PC-3 (cell line): ENCODE measurements at regions of chr2 and their contacts with region 1.

Region 1: GRCh38 chr2:102258386-102259074 is 52.8 kb upstream of the IL1RL1 start:
- DNase-seq: peak; percentile 85
- ATAC-seq: peak; percentile 95
- H3K4me3 ChIP-seq: no peak overlapping the region
- H3K27ac ChIP-seq: peak overlapping the region; percentile 52
- H3K4me1 ChIP-seq: peaks cover 14% of the 10 kb centered on the region
- H3K27me3 ChIP-seq: no peaks in the 10 kb centered on the region
- CTCF ChIP-seq: no peak

Region 2: DNA sequence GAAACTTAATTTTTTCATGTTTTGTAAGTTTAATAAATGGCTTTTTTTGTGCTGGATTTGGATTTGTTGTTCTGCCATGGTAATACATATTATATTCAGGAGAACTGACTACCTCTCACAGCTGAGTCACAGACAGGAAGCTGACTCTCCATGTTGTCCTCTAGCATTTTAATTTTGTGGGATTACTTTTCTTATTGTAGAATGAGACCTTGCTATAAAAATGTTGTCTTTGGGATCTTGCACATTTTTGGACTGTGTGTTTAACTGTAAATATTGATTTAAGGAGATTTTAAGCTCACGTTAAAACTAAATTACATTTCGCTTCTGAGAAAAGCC is 512.2 kb before region 1 on chr2:
- CTCF ChIA-PET with region 1: no interaction called
- POLR2A ChIA-PET with region 1: interaction called, 27 read pairs
- intact Hi-C with region 1: no loop called
- DNase-seq: peak; percentile 88
- ATAC-seq: peak; percentile 92
- H3K4me3 ChIP-seq: peak overlapping the region; percentile 49
- H3K27ac ChIP-seq: peak overlapping the region; percentile 98
- H3K4me1 ChIP-seq: peaks cover 57% of the 10 kb centered on the region
- H3K27me3 ChIP-seq: no peaks in the 10 kb centered on the region
- CTCF ChIP-seq: no peak

Region 3: DNA sequence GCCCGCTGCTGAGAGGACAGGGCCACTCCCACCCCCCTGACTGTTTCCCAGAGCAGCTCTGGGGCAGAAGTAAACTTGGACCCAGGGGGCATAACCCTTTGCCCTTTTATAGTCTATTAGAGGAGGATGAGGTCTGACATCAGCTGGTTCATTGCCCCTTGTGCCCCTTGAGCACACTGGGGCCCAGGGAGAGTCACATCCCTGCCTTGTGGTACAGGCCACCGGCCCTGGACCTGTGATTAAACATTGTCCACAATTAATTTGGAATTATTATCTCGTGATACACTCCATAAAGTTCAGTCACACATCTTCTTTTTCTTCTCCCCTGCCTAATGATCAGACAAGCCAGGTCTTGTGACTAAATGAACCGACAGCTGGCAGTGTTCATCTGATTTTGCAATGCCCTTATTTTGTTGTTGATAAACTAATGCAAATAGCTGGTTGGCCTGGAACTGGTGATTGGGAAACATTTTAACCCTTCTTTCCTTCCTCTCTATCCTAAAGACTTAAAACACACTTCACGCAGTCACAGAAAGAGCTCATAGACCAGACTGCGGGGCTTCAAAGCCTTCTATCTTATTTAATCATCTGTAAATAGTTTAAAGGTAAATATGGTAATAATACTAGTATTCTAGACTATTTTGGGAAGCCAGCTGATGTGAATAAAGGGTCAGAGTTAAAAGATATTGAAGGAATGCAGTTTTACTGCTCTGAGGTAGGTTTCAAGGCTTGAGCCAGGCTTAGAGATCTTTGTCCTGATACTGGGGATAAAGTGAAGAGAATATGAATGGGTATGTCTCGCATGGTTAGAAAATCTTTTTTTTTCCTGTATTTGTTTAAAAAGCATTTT is 102.7 kb before region 1 on chr2:
- CTCF ChIA-PET with region 1: no interaction called
- POLR2A ChIA-PET with region 1: no interaction called
- intact Hi-C with region 1: no loop called
- DNase-seq: no peak
- ATAC-seq: no peak
- H3K4me3 ChIP-seq: no peak overlapping the region
- H3K27ac ChIP-seq: no peak overlapping the region
- H3K4me1 ChIP-seq: peaks cover 2% of the 10 kb centered on the region
- H3K27me3 ChIP-seq: no peaks in the 10 kb centered on the region
- CTCF ChIP-seq: no peak

Region 4: DNA sequence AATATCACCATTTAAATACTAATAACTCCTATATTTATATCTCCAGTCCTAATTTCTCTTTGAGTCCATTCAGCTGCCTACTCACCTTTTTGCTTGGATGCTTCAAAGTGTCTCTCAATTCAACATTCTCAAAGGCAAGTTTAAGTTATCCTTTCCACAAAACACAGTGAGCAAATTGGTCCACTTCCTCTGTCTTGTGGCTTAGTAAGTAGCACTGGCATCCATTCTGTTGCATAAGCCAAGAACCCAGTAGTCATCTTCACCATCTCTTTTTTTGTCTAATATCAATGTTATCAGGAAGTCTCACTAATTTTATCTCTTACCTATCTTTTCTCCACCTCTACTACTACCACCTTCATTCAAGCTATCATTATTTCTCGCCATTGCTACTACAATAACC is 25.5 kb after region 1 on chr2:
- CTCF ChIA-PET with region 1: no interaction called
- POLR2A ChIA-PET with region 1: no interaction called
- intact Hi-C with region 1: loop called (anchors 2 kb)
- DNase-seq: no peak
- ATAC-seq: no peak
- H3K4me3 ChIP-seq: no peak overlapping the region
- H3K27ac ChIP-seq: no peak overlapping the region
- H3K4me1 ChIP-seq: peaks cover 28% of the 10 kb centered on the region
- H3K27me3 ChIP-seq: no peaks in the 10 kb centered on the region
- CTCF ChIP-seq: no peak

Region 5: DNA sequence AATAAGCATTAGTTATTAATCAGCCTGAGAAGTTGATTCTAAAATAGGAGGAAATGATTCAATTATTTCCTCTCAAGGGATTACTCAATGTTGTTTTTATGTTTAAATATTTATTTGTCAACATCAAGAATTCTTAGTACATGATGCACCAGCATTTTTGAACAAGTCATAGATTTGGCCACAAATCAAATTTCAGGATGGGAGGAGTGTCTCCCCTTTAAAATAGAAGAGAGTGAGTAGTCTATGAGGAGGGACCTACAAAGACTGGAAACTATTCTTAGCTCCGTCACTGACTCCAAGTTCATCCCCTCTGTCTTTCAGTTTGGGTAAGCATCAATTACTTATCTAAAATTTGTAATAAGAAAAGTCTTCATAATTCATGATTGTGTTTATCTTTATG is 78.5 kb after region 1 on chr2:
- CTCF ChIA-PET with region 1: interaction called, 6 read pairs
- POLR2A ChIA-PET with region 1: interaction called, 3 read pairs
- intact Hi-C with region 1: loop called (anchors 1 kb)
- DNase-seq: peak; percentile 95
- ATAC-seq: peak; percentile 78
- H3K4me3 ChIP-seq: peak overlapping the region; percentile 62
- H3K27ac ChIP-seq: peak overlapping the region; percentile 99
- H3K4me1 ChIP-seq: peaks cover 42% of the 10 kb centered on the region
- H3K27me3 ChIP-seq: no peaks in the 10 kb centered on the region
- CTCF ChIP-seq: no peak

Region 6: GRCh38 chr2:102355526-102356380 is 97.2 kb after region 1 on chr2 and contains the start of gene IL18R1:
- CTCF ChIA-PET with region 1: interaction called, 5 read pairs
- POLR2A ChIA-PET with region 1: interaction called, 30 read pairs
- intact Hi-C with region 1: loop called (anchors 1 kb)
- DNase-seq: peak; percentile 82
- ATAC-seq: peak; percentile 98
- H3K4me3 ChIP-seq: peak within 1 kb of the TSS; percentile 91
- H3K27ac ChIP-seq: peak within 1 kb of the TSS; percentile 31; the same call in 1 of the 2 replicates
- H3K4me1 ChIP-seq: peaks cover 6% of the 10 kb centered on the region; the same call in 1 of the 2 replicates
- H3K27me3 ChIP-seq: no peaks in the 10 kb centered on the region
- CTCF ChIP-seq: peak; percentile 90
- total RNA-seq, gene IL18R1: 1.2 and 3.6 TPM in 2 replicates

Region 7: DNA sequence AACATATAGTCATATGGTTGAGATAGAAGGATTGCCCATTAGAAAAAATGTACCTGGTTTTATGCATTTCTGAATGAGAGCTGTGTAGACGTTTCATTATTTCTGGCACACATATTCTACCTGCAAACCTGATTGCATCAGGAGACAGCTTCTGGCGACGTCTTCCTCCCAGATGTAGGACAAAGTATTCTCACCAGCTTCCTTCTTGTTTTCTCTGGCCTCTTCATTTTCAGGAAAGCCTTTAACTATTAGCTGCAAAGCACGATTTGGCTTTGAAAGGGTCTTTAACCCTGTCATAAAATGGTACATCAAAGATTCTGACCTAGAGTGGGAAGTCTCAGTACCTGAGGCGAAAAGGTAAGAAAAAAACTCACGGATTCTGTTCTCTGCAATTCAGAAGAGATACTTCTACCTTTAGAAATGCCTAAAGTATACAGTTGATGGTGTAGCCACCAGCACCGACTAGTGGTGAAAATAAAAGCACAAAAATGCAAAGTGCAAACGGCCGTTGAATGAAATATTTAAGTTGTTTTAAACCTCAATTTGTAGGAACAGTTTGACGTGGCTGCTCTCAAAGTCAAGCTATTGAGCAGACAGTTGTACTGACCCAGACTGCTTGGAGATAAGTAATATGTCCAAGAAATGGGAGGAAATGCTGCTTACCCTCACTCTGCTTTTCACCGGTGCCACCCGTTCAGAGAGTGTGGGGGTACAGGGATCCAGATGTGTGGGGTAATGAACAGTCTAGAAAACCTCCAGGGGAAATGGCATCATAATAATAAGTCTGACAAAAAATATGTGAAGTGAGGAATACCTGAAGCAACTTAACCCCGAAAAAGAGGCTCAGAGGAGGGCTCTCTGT is 184.7 kb after region 1 on chr2:
- CTCF ChIA-PET with region 1: interaction called, 3 read pairs
- POLR2A ChIA-PET with region 1: no interaction called
- intact Hi-C with region 1: loop called (anchors 1 kb)
- DNase-seq: peak; percentile 72
- ATAC-seq: peak; percentile 81
- H3K4me3 ChIP-seq: peak overlapping the region; percentile 52
- H3K27ac ChIP-seq: no peak overlapping the region
- H3K4me1 ChIP-seq: peaks cover 5% of the 10 kb centered on the region; the same call in 1 of the 2 replicates
- H3K27me3 ChIP-seq: no peaks in the 10 kb centered on the region
- CTCF ChIP-seq: peak; percentile 94

Region 8: GRCh38 chr2:102449370-102449974 is 190.9 kb after region 1 on chr2:
- CTCF ChIA-PET with region 1: interaction called, 3 read pairs
- POLR2A ChIA-PET with region 1: no interaction called
- intact Hi-C with region 1: loop called (anchors 1 kb)
- DNase-seq: peak; percentile 65
- ATAC-seq: peak; percentile 55
- H3K4me3 ChIP-seq: no peak overlapping the region
- H3K27ac ChIP-seq: no peak overlapping the region
- H3K4me1 ChIP-seq: no peaks in the 10 kb centered on the region
- H3K27me3 ChIP-seq: 0 out of 2 replicates have a peak, but pooled peaks cover 1% of the 10 kb centered on the region
- CTCF ChIP-seq: peak; percentile 89

Region 9: GRCh38 chr2:102637358-102637757 is 378.8 kb after region 1 on chr2:
- CTCF ChIA-PET with region 1: no interaction called
- POLR2A ChIA-PET with region 1: no interaction called
- intact Hi-C with region 1: no loop called
- DNase-seq: peak; percentile 79
- ATAC-seq: peak; percentile 88
- H3K4me3 ChIP-seq: no peak overlapping the region
- H3K27ac ChIP-seq: peak overlapping the region; percentile 82
- H3K4me1 ChIP-seq: peaks cover 30% of the 10 kb centered on the region
- H3K27me3 ChIP-seq: no peaks in the 10 kb centered on the region
- CTCF ChIP-seq: peak; percentile 54